ENCODE measurements at regions of chr7 and their contacts with region 1.

Region 1: DNA sequence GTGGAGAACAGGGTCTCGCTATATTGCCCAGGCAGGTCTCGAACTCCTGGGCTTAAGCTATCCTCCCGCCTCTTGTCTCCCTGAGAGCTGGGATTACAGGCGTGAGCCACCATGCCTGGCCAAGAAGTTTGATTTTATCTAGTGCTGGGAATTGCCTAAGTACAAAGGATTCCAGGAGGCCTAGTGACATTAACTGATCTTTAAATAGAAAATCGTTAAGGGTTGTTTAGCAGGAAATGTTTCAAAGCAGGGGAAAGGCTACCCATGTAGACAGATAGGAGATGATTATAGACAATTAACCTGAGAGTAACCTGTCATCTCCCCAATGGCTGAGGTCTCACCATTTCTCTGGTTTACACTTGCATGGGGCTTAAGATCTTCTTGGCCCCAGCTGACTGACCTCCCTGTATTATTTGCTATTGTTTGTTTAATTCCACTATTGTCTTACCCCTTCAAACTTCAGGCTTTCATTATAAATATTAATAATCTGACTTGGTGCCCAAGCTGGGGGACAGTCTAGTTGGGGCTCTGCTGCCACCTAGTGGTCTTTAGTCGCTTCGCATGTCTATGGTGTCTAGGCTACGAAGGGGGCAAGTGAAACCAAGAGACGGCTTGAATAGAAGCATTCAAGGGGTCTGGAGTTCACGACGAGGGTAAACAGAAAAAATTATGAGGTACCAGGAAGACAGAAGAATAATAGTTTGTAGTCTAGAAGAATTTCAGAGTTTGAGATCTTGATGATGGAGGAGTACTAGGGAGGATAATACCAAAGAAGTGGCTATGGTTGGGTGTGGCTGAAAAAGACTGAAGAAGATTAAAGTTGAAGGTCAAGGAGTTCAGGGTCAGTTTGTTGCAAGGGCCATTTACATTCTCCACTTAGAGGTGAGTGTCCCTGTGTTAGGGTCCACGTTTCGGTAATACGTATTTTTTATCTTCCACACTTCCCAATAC is 40.4 kb upstream of the BPGM start:
- DNase-seq: no peak
- H3K4me3 ChIP-seq: peak overlapping the region in 1 of 3 experiments; percentile 26
- H3K27ac ChIP-seq: no peak overlapping the region
- H3K4me1 ChIP-seq: peaks cover 7% of the 10 kb centered on the region
- H3K27me3 ChIP-seq: no peaks in the 10 kb centered on the region
- CTCF ChIP-seq: peak; percentile 85 to 93

Region 2: DNA sequence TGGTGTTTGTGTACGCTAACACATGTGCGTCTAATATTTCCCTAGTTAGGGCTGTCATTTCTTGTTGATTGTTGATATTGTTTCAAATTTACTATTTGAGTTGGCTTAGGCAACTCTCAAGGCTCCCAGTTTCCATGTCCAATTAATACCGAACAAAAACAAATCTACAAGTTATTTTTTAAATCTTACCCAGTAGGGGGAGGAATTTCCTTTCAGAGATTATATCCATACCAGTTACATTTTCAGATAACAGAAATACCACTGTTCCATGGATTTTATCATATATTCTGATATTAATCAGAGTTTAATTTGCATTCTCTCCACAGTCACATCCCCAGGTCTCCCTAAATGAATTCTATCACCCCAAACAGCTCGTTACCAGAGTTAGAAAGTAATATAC is 86.1 kb before region 1 on chr7:
- CTCF ChIA-PET with region 1: no interaction called
- dilution Hi-C with region 1: no loop called
- in situ Hi-C with region 1: loop called in 1 of 2 experiments (anchors 5 kb)
- intact Hi-C with region 1: loop called (anchors 1 kb)
- DNase-seq: no peak
- H3K4me3 ChIP-seq: no peak overlapping the region
- H3K27ac ChIP-seq: no peak overlapping the region
- H3K4me1 ChIP-seq: peaks cover 21% of the 10 kb centered on the region
- H3K27me3 ChIP-seq: no peaks in the 10 kb centered on the region
- CTCF ChIP-seq: peak; percentile 2 to 30

Region 3: GRCh38 chr7:134547397-134548054 is 58.7 kb before region 1 on chr7:
- CTCF ChIA-PET with region 1: interaction called, 3 read pairs
- dilution Hi-C with region 1: no loop called
- in situ Hi-C with region 1: no loop called
- intact Hi-C with region 1: loop called (anchors 1 kb)
- DNase-seq: peak; percentile 72
- H3K4me3 ChIP-seq: peak overlapping the region; percentile 36 to 45 (median 42)
- H3K27ac ChIP-seq: peak overlapping the region; percentile 70
- H3K4me1 ChIP-seq: peaks cover 22% of the 10 kb centered on the region
- H3K27me3 ChIP-seq: no peaks in the 10 kb centered on the region
- CTCF ChIP-seq: peak; percentile 82 to 86

Region 4: GRCh38 chr7:134553976-134554375 is 52.3 kb before region 1 on chr7:
- CTCF ChIA-PET with region 1: no interaction called
- dilution Hi-C with region 1: no loop called
- in situ Hi-C with region 1: no loop called
- intact Hi-C with region 1: loop called (anchors 2 kb)
- DNase-seq: peak; percentile 23
- H3K4me3 ChIP-seq: no peak overlapping the region
- H3K27ac ChIP-seq: no peak overlapping the region
- H3K4me1 ChIP-seq: no peaks in the 10 kb centered on the region
- H3K27me3 ChIP-seq: no peaks in the 10 kb centered on the region
- CTCF ChIP-seq: peak; percentile 9 to 61

Measured in mammary epithelial cell (primary cell).